ENCODE measurements at regions of chr5 and their contacts with region 1.

Region 1: DNA sequence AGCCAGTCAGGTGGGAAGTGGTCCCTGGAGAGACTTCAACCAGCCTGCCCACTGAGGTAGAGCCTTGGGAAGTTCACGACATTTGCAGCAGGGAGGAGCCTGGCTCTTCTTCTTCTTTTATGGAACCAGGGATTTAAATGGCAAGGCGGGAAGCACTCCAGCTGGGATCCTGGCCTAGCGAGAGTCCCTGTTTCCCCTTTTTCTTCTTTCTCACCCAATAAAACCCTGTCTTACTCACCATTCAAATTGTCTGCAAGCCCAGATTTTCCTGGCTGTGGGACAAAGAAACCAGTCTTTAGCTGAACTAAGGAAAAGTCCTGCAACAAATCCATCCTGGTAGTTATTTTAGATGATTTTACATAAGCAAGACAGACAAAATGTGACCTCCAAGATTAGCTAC is 503.7 kb downstream of the CDH10 start:
- DNase-seq: no peak
- H3K4me3 Mint-ChIP-seq: no peak overlapping the region
- H3K27ac Mint-ChIP-seq: no peak overlapping the region
- H3K4me1 Mint-ChIP-seq: no peaks in the 10 kb centered on the region
- H3K27me3 Mint-ChIP-seq: no peaks in the 10 kb centered on the region

Region 2: GRCh38 chr5:24177821-24178220 is 36.8 kb after region 1 on chr5:
- CTCF ChIA-PET with region 1: no interaction called
- POLR2A ChIA-PET with region 1: interaction called, 10 read pairs
- DNase-seq: no peak
- H3K4me3 Mint-ChIP-seq: no peak overlapping the region
- H3K27ac Mint-ChIP-seq: no peak overlapping the region
- H3K4me1 Mint-ChIP-seq: no peaks in the 10 kb centered on the region
- H3K27me3 Mint-ChIP-seq: no peaks in the 10 kb centered on the region

Measured in activated CD4-positive, alpha-beta T cell treated with anti-CD3 and anti-CD28 coated beads, Interleukin-2, amount 10 ng/mL, durations not matched to agents 7 days and 5 days (primary cell).